GM13977 (cell line): ENCODE measurements at regions of chr6 and their contacts with region 1.

Region 1: GRCh38 chr6:24766680-24767462 is 7.9 kb upstream of the GMNN start:
- DNase-seq: peak; percentile 82
- CTCF ChIP-seq: peak; percentile 44

Region 2: GRCh38 chr6:24581084-24581669 is 185.7 kb before region 1 on chr6:
- in situ Hi-C with region 1: loop called (anchors 10 kb)
- DNase-seq: peak; percentile 43
- CTCF ChIP-seq: peak; percentile 90

Region 3: GRCh38 chr6:24595512-24596217 is 171.2 kb before region 1 on chr6:
- in situ Hi-C with region 1: no loop called
- DNase-seq: no peak
- CTCF ChIP-seq: no peak

Region 4: DNA sequence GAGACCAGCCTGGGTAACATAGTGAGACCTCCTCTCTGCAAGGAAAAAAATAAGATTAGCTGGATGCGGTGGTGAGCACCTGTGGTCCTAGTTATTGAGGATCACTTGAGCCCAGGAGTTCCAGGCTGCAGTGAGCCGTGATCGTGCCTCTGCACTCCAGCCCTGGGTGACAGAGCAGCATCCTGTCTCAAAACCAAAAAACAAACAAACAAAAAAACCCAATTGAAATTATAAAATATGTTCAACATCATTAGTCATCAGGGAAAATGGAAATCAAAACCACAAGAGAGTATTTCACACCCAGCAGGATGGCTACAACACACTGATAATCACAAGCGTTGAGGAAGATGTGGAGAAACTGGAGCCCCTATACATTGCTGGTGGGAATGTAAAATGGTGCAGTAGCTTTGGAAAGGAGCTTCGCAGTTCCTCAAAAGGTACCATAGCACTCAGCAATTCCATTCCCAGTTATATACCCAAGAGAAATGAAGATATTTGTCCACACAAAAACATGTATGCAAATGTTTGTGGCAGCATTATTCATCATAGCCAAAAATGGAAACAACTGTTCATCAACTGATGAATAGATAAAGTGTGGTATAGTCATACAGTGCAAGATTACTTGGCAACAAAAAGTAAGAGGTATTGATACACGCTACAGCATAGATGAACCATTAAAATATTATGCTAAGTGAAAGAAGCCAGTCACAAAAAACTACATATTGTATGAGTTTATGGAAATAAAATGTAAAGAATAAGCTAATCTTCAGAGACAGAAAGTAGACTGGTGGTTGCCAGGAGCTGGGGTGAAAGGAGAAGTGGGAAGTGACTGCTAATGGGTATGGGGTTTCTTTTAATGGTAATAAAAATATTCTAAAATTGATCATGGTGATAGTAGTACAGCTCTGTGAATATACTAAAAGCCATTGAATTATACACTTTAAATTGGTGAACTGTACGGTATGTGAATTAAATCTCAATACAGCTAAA is 207.6 kb after region 1 on chr6:
- in situ Hi-C with region 1: no loop called
- DNase-seq: peak; percentile 17
- CTCF ChIP-seq: no peak